Posterior vena cava (tissue), 2 donors: ENCODE measurements at regions of chr11 and their contacts with region 1.

Region 1: GRCh38 chr11:19553683-19554333 is 158.8 kb upstream of the NAV2 start:
- DNase-seq: peak; percentile 92

Region 2: DNA sequence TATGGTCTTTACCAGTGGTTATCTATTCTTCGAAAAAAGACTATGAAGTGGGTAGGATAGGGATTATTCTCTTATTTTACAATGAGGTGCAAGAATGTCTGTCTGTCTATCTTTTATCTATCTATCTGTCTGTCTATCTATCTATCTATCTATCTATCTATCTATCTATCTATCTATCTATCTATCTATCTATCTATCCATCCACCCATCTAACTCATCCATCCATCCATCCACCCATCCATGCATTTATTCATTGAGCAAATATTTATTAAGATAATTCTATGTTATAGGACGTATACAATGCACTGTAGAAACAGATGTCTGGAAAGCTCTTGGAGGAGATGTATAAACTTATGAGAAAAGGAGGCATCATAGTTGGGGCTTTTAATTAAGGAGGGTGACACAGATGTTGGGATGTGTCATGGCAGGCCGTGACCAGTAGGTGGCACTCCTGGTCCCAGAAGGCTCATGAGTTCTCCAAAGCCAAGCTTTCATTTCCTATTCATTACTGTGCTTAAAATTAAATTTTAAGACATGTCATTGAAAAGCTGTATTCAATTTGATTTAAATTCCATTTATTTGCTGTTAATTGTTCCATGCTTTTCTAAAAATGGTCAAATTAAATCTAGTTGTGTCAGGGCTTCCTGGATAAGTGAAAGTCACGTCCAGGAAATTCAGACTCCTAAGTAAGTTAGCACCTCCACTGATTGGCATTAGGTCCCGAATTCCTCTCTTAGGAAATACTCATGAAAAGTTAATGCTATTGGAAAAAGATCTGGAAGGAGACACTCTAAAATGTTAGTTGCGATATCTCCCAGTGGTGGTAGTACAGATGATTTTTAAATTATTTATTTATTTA is 294.1 kb before region 1 on chr11:
- intact Hi-C with region 1: loop called (anchors 2 to 5 kb)
- DNase-seq: peak; percentile 89

Region 3: DNA sequence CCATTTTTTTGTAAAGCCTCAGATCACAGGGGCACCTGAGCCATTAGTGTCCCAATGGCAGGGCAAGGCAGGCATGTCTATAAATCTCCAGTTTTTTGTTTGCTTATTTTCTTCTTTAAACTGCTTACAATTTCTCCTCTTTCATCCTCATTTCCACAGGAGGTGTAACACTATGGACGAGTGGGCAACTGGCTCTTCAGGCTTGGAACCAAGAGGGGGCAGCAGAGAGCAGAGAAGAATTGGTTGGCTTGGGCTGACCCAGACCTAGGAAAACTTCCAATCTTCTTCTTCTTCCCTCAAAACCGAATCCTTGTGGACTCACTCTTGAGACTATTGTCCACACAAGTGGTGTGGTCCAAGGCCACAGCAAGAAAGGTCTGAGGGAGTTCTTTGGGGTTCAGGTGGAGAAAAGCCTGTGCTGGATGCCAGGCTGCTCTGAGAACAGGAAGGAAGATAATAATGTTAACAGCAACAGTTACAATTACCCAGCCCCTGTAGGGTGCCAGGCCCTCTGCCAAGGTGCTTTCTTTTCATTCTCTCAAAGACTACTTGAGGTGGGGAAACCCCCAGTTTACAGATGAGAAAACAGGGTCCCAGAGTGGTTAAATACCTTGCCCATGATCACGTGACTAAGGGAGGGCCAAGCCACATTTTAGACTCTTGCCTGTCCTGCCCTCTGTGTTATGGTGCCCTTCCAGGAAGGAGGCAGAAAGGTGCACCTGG is 242.3 kb before region 1 on chr11:
- intact Hi-C with region 1: loop called (anchors 1 to 2 kb)
- DNase-seq: peak; percentile 88

Region 4: GRCh38 chr11:19846654-19847305 is 293.0 kb after region 1 on chr11:
- intact Hi-C with region 1: no loop called
- DNase-seq: no peak

Region 5: GRCh38 chr11:19903620-19904069 is 349.8 kb after region 1 on chr11:
- intact Hi-C with region 1: loop called (anchors 1 to 5 kb)
- DNase-seq: peak; percentile 82